Activated T-helper 1 cell treated with anti-CD3 and anti-CD28 coated beads, Interleukin-12 subunit alpha, Interleukin-12 subunit beta, Interleukin-2, Interleukin-4 antibody, amounts not matched to agents 30 ng/mL and 10 ng/mL and 1 ng/mL, durations not matched to agents 14 hours and 24 hours and 36 hours (primary cell): ENCODE measurements at regions of chr16 and their contacts with region 1.

Region 1: GRCh38 chr16:56450986-56451752 is at the starts of genes NUDT21 and OGFOD1:
- DNase-seq: peak; percentile 92
- H3K4me3 Mint-ChIP-seq: peak within 1 kb of the TSS; percentile 97
- H3K27ac Mint-ChIP-seq: peak within 1 kb of the TSS; percentile 97
- H3K4me1 Mint-ChIP-seq: peaks cover 65% of the 10 kb centered on the region
- H3K27me3 Mint-ChIP-seq: no peaks in the 10 kb centered on the region
- total RNA-seq, gene NUDT21: 271 and 313 TPM in 2 replicates
- total RNA-seq, gene OGFOD1: 87.9 and 90.9 TPM in 2 replicates

Region 2: GRCh38 chr16:56356276-56357240 is 94.6 kb before region 1 on chr16:
- intact Hi-C with region 1: loop called (anchors 1 kb)
- DNase-seq: peak; percentile 46
- H3K4me3 Mint-ChIP-seq: peak overlapping the region; percentile 71
- H3K27ac Mint-ChIP-seq: peak overlapping the region; percentile 88
- H3K4me1 Mint-ChIP-seq: peaks cover 38% of the 10 kb centered on the region
- H3K27me3 Mint-ChIP-seq: peaks cover 2% of the 10 kb centered on the region

Region 3: DNA sequence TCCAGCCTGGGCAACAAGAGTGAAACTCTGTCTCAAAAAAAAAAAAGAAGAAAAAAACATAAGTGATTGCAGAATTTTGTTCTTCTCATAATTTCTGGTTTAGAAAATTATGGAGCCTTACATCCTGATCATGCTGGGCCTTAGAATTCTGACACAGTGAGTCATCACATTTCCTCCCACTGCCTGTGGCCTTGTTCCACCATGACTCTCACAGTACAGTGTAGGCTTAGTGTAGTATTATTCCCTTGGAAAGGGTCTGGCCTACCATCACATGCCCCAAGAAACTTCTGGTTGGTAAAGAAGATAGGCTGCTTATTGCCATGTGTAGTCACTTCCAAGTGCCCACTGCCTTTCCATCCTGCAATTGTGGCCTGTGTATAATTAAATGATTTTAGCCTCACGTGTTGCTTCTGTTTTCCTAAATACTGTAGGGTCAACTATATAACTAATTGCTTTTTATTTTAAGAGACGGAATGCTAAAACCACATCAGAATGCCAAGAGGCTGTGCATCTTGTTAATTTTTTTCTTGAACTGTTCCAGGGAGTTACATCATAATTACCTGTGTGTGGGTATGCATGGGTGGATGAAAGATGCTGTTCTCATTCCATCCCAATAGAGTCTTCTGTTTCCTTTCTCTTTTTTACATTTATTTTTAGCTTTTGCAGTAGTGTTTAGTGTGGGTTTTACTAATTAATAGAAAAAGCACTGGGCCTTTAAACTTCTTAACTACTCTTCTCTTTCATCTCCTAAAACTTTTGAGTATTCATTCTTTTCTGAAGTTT is 26.1 kb after region 1 on chr16:
- intact Hi-C with region 1: loop called (anchors 2 kb)
- DNase-seq: no peak
- H3K4me3 Mint-ChIP-seq: no peak overlapping the region
- H3K27ac Mint-ChIP-seq: peak overlapping the region; percentile 53
- H3K4me1 Mint-ChIP-seq: peaks cover 15% of the 10 kb centered on the region
- H3K27me3 Mint-ChIP-seq: no peaks in the 10 kb centered on the region

Region 4: GRCh38 chr16:56625140-56625942 is 174.2 kb after region 1 on chr16 and contains the start of gene MT1E:
- intact Hi-C with region 1: loop called (anchors 5 kb)
- DNase-seq: peak; percentile 71
- H3K4me3 Mint-ChIP-seq: peak within 1 kb of the TSS; percentile 92
- H3K27ac Mint-ChIP-seq: peak within 1 kb of the TSS; percentile 93
- H3K4me1 Mint-ChIP-seq: peaks cover 23% of the 10 kb centered on the region
- H3K27me3 Mint-ChIP-seq: peaks cover 6% of the 10 kb centered on the region
- total RNA-seq, gene MT1E: 135 TPM in 2 replicates

Region 5: DNA sequence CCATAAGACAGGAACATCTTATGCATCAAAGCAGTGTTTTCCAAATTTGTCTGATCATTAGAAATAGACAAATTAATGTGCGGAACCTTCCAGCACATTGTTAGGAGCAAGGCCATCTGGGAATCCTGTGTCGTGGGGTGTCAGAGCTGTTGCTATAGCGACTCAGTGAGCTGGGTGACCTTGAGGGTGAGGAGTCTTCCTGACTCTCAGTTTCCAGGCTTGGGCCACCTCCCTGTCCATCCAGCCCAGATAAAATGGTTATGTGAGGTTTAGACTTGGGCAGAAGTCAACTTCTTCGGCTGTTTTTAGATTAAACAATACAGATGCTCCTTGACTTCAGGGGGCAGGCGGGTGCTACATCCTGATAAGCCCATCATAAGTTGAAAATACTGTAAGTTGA is 251.7 kb after region 1 on chr16:
- intact Hi-C with region 1: loop called (anchors 1 kb)
- DNase-seq: no peak
- H3K4me3 Mint-ChIP-seq: no peak overlapping the region
- H3K27ac Mint-ChIP-seq: no peak overlapping the region
- H3K4me1 Mint-ChIP-seq: peaks cover 11% of the 10 kb centered on the region
- H3K27me3 Mint-ChIP-seq: peaks cover 11% of the 10 kb centered on the region

Region 6: GRCh38 chr16:56931892-56932720 is 480.9 kb after region 1 on chr16 and contains the start of gene HERPUD1:
- intact Hi-C with region 1: loop called (anchors 5 kb)
- DNase-seq: peak; percentile 99
- H3K4me3 Mint-ChIP-seq: peak within 1 kb of the TSS; percentile 95
- H3K27ac Mint-ChIP-seq: peak within 1 kb of the TSS; percentile 94
- H3K4me1 Mint-ChIP-seq: peaks cover 41% of the 10 kb centered on the region
- H3K27me3 Mint-ChIP-seq: no peaks in the 10 kb centered on the region
- total RNA-seq, gene HERPUD1: 176 and 178 TPM in 2 replicates

Region 7: DNA sequence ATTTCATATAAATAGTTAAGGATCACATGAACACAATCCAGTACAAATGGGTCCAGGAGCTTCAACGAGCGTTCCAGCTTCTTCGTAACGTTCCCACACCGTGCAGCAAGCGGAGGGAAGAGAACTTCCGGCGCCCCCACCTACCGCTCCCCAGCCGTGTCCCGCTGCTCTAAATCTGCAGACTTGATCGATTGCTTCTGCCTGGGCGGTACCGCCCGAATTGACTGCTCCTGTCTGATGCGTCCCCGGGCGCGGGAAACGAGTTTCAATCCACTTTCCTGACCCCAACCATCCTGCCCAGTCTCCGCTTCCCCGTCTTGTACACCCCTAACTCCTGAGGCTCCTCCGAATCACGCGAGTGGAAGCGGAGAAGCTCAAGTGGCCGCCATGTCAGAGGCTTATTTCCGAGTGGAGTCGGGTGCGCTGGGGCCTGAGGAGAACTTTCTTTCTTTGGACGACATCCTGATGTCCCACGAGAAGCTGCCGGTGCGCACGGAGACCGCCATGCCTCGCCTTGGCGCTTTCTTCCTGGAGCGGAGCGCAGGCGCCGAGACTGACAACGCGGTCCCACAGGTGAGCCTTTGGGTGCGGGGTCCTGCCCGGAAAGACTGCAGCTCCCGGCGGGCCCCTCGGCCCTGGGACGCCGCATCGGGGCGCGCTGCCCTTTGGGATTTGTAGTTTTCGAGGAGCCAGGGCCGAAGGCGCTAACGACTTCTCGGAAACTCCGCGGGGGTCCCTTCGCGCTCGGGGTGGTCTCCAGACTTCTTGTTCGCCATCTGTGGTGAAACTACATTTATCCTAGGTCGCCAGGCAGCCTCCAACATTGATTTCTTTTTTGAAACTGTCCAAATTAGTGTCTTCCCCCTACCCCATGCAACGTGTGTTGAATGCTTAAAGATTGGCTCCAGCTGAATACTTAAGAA is 1941.3 kb after region 1 on chr16 and contains the start of gene GINS3:
- intact Hi-C with region 1: loop called (anchors 2 kb)
- DNase-seq: peak; percentile 82
- H3K4me3 Mint-ChIP-seq: peak within 1 kb of the TSS; percentile 95
- H3K27ac Mint-ChIP-seq: peak within 1 kb of the TSS; percentile 95
- H3K4me1 Mint-ChIP-seq: peaks cover 21% of the 10 kb centered on the region
- H3K27me3 Mint-ChIP-seq: peaks cover 11% of the 10 kb centered on the region
- total RNA-seq, gene GINS3: 23.8 and 25.3 TPM in 2 replicates